ENCODE measurements at regions of chr20 and their contacts with region 1.

Region 1: DNA sequence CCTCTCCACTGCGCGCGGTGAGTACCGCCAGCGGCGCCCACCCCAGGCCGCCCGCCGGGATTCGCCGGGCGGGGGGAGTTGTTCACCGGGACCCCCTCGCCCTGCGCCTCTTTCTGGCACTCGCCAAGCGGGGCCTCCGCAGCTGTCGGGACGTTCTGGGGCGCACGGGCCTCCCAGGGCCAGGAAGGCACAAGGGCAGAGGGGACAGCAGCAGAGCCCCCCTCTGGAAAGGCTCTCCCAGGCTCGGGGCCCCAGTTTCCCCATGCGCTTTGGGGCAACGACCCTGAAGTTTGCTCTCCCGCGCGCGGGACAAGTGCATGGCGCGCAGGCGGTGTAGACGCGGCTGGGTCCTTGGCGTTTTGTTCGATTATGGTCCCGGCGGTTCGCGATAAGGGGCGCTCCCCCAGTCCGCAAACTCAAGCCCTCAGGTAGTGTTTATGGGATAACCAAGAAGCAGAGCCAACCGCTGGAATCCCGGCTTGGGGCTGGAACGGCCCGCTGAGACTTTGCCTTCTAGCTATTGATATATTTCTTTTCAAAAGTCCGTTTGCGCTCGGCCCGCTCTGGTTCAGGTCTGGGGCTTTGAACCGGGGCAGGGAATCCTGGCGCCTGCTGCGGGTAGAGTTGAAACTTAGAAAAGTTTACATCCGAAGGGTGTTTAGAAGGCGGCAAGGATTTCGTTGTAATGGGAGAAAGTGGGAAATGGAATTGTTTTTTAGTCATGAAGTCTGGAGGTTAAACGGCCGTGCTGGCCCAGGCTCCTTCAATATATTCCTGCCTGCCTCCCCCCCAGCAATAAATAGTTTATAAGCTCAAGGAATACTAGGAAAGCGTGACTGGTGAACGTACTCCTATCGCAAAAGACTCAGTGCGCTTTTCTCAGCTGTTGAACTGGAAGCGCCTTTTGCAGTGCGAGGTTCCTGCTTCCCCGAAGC is 595 bp downstream of the EYA2 start:
- DNase-seq: peak; percentile 50
- H3K4me3 ChIP-seq: peak overlapping the region; percentile 55
- H3K27ac ChIP-seq: peak overlapping the region; percentile 25
- H3K4me1 ChIP-seq: no peaks in the 10 kb centered on the region
- H3K27me3 ChIP-seq: no peaks in the 10 kb centered on the region
- CTCF ChIP-seq: no peak

Region 2: GRCh38 chr20:46767127-46767761 is 128.0 kb before region 1 on chr20:
- intact Hi-C with region 1: loop called (anchors 10 kb)
- DNase-seq: peak; percentile 60
- H3K4me3 ChIP-seq: no peak overlapping the region
- H3K27ac ChIP-seq: no peak overlapping the region
- H3K4me1 ChIP-seq: no peaks in the 10 kb centered on the region
- H3K27me3 ChIP-seq: no peaks in the 10 kb centered on the region
- CTCF ChIP-seq: peak; percentile 52

Region 3: DNA sequence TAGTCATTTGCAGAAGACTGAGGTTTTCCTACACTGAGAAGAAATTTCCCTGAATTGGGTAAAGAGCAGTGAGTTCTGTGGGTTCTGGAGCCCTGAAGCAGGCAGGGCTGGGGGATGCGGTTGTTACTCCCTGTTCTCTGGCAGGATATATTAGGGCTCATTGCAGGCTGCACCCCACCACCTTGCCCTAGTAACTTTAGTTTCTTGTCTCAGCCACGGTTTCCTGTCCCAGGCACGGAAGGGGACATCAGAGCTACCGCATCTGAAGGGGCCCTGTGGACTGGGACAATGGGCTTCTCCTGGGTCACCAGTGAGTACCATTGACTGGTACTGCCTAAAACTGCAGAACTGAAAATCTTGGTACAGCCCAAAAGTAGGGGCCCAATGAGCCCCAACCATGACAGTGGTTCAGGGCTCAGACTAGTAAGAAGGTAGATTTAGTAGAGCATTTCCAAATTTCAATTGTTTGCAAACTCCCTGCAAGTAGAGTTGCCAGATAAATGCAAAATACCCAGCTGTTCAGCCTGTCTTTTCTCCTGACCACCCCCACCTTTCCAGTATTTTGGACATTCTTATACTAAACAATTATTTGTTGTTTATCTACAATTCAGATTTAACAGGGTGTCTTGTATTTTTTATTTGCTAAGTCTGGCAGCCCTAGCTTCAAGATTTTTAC is 55.0 kb before region 1 on chr20:
- intact Hi-C with region 1: no loop called
- DNase-seq: no peak
- H3K4me3 ChIP-seq: no peak overlapping the region
- H3K27ac ChIP-seq: no peak overlapping the region
- H3K4me1 ChIP-seq: no peaks in the 10 kb centered on the region
- H3K27me3 ChIP-seq: no peaks in the 10 kb centered on the region
- CTCF ChIP-seq: no peak